H1 (cell line): ENCODE measurements at regions of chr15 and their contacts with region 1.

Region 1: GRCh38 chr15:65212097-65212496 is 824 bp upstream of the CILP start:
- DNase-seq: peak in 1 of 2 experiments; percentile 71
- H3K4me3 ChIP-seq: no peak overlapping the region
- H3K27ac ChIP-seq: no peak overlapping the region
- H3K4me1 ChIP-seq: peaks cover 0 to 4% (median 0%) of the 10 kb centered on the region in 4 experiments; a peak in 3 of 7 replicates
- H3K27me3 ChIP-seq: no peaks in the 10 kb centered on the region; a peak in 1 of 7 replicates
- CTCF ChIP-seq: peak; percentile 74 to 94 (median 85)
- EP300 ChIP-seq: no peak
- POLR2A ChIP-seq: no peak
- RAD21 ChIP-seq: peak; percentile 49 to 62

Region 2: GRCh38 chr15:65133548-65134200 is 78.4 kb before region 1 on chr15 and contains the start of gene PDCD7:
- CTCF ChIA-PET with region 1: no interaction called
- POLR2A ChIA-PET with region 1: no interaction called
- DNase-seq: peak; percentile 60 to 86
- H3K4me3 ChIP-seq: peak within 1 kb of the TSS; percentile 71 to 77 (median 72)
- H3K27ac ChIP-seq: peak within 1 kb of the TSS; percentile 51; the same call in 1 of the 2 replicates
- H3K4me1 ChIP-seq: peaks cover 2 to 6% (median 3%) of the 10 kb centered on the region in 4 experiments; a peak in 4 of 7 replicates
- H3K27me3 ChIP-seq: no peaks in the 10 kb centered on the region
- CTCF ChIP-seq: no peak
- EP300 ChIP-seq: no peak
- POLR2A ChIP-seq: peak in 1 of 2 experiments; percentile 91; a peak in 2 of 3 replicates
- RAD21 ChIP-seq: no peak
- total RNA-seq, gene PDCD7: 25.5 and 25.6 TPM in 2 replicates

Region 3: GRCh38 chr15:65177901-65178300 is 34.2 kb before region 1 on chr15:
- CTCF ChIA-PET with region 1: no interaction called
- POLR2A ChIA-PET with region 1: no interaction called
- DNase-seq: no peak
- H3K4me3 ChIP-seq: no peak overlapping the region
- H3K27ac ChIP-seq: no peak overlapping the region
- H3K4me1 ChIP-seq: no peaks in the 10 kb centered on the region
- H3K27me3 ChIP-seq: no peaks in the 10 kb centered on the region
- CTCF ChIP-seq: no peak
- EP300 ChIP-seq: no peak
- POLR2A ChIP-seq: no peak
- RAD21 ChIP-seq: no peak

Region 4: DNA sequence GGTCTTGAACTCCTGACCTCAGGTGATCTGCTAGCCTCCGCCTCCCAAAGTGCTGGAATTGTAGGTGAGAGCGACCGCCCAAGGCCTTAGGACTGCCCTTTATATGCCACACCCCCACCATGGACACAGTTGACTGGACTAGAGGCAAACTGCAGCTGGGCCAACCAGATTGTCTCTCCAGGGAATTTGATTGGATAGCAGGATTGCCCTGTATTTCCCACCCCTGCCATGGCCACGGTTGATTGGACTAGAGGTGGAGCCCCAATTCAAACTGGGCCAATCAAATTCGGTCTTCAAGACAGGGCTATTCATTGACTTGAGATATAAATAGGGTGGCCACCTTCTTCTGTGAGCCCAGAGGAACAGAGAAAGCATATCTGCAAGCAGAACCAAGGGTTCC is 20.1 kb before region 1 on chr15:
- CTCF ChIA-PET with region 1: interaction called, 62 read pairs
- POLR2A ChIA-PET with region 1: interaction called, 5 read pairs
- DNase-seq: no peak
- H3K4me3 ChIP-seq: no peak overlapping the region
- H3K27ac ChIP-seq: no peak overlapping the region
- H3K4me1 ChIP-seq: 0 out of 7 replicates have a peak, but pooled peaks cover 0 to 2% (median 0%) of the 10 kb centered on the region in 4 experiments
- H3K27me3 ChIP-seq: no peaks in the 10 kb centered on the region
- CTCF ChIP-seq: no peak
- EP300 ChIP-seq: no peak
- POLR2A ChIP-seq: no peak
- RAD21 ChIP-seq: no peak

Region 5: DNA sequence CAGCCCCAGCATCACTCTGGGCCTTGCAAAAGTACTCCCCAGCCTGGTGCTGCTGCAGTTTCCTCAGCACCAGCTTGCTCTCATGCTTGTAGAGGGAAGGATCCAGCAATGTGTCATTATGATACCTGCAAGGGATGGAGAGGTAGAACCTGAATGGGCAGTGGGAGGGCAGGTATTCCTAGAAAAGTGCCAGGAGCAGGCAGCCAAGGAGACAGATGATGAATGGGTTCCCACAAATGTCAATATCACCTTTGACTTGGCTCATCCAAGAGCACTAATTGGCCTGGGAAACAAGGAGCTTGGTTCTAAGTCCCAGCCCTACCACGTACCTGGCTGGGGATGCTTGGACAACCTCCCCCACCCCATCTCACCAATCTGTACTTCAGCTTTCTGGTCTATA is 10.2 kb before region 1 on chr15:
- CTCF ChIA-PET with region 1: interaction called, 62 read pairs
- POLR2A ChIA-PET with region 1: interaction called, 3 read pairs
- DNase-seq: no peak
- H3K4me3 ChIP-seq: no peak overlapping the region
- H3K27ac ChIP-seq: no peak overlapping the region
- H3K4me1 ChIP-seq: no peaks in the 10 kb centered on the region
- H3K27me3 ChIP-seq: no peaks in the 10 kb centered on the region
- CTCF ChIP-seq: no peak
- EP300 ChIP-seq: no peak
- POLR2A ChIP-seq: no peak
- RAD21 ChIP-seq: no peak

Region 6: GRCh38 chr15:65222891-65223290 is 10.8 kb after region 1 on chr15:
- CTCF ChIA-PET with region 1: interaction called, 43 read pairs
- POLR2A ChIA-PET with region 1: interaction called, 4 read pairs
- DNase-seq: no peak
- H3K4me3 ChIP-seq: no peak overlapping the region
- H3K27ac ChIP-seq: no peak overlapping the region
- H3K4me1 ChIP-seq: peaks cover 0 to 4% (median 2%) of the 10 kb centered on the region in 4 experiments; a peak in 4 of 7 replicates
- H3K27me3 ChIP-seq: no peaks in the 10 kb centered on the region
- CTCF ChIP-seq: no peak
- EP300 ChIP-seq: no peak
- POLR2A ChIP-seq: no peak
- RAD21 ChIP-seq: no peak

Region 7: DNA sequence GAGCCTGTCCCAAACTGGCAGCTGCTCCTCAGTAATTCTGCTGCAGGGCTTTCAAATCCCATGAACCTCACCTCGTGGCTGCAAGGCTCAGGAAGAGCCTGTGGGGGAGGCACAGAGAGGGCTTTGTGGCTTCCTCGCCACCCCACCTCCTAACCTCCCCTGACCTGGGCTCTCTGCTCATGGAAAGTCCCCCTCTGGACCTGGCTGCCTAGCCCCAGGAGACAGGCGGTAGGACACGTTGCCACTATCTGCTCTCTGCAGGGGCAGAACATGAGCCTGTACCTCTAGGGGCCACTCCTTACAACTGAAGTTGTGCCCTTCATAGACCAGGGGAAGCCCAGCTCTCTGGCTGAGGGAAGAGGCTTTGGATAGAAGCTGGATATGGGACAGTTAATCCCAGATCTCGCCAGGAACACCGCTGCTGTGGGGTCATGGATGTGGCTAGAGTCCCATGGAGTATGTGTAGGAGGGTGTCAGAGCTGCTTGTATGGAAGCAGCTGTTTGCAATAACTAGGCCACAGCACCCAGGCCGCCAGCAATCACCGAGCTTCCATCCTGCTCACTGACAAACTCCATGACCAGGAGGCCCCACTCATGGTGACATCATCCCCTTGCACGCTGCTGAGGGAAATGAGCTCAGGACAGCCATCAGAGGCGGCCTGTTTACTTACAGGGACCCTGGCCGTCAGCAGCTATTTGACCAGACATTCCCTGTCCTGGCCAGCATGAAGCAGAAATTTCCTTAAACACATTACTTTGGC is 33.2 kb after region 1 on chr15:
- CTCF ChIA-PET with region 1: interaction called, 11 read pairs
- POLR2A ChIA-PET with region 1: no interaction called
- DNase-seq: no peak
- H3K4me3 ChIP-seq: no peak overlapping the region
- H3K27ac ChIP-seq: no peak overlapping the region
- H3K4me1 ChIP-seq: peaks cover 0 to 4% (median 2%) of the 10 kb centered on the region in 4 experiments; a peak in 4 of 7 replicates
- H3K27me3 ChIP-seq: no peaks in the 10 kb centered on the region; a peak in 1 of 7 replicates
- CTCF ChIP-seq: no peak
- EP300 ChIP-seq: no peak
- POLR2A ChIP-seq: no peak
- RAD21 ChIP-seq: no peak

Region 8: DNA sequence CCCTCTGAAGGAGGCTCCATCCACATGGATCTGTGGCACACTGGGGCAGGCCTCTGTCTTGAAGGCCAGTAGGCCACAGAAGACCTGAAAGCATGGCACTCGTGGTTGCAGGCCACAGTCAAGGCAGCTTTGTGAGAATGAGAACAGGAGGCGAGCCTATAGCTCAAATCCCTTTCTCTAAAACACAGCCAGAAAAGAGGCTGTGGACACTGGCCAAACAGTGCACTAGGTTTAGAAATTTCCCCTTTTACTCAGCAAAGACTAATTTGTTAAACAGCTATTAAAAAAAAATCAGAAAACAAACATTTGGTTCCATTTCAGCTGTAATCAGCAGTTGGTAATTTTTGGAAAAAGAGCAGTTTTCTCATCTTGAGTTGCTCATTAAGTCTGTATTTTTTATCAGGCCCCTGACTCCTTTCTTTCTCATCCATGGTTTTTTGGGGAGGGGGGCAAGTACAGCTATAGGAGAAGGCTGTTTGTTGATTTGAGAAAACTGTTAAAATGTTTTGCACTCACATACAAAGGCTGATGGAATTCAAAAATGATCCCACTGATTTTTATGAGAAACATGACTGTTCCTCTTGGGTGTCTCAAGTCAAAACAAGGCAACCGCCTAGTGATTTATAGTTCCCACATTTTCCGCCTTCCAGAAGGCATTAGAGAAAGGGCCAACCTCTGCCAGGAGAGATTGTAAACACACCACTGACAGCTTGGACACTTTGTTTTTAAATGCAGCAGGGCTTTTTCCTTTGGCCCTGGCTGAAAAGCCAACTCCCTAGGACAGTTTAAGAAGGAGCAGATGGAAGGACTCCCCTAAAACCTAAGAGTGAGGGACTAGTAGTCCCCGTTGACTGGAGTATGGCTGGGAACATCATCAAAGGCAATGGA is 46.5 kb after region 1 on chr15:
- CTCF ChIA-PET with region 1: interaction called, 10 read pairs
- POLR2A ChIA-PET with region 1: no interaction called
- DNase-seq: no peak
- H3K4me3 ChIP-seq: no peak overlapping the region
- H3K27ac ChIP-seq: no peak overlapping the region
- H3K4me1 ChIP-seq: no peaks in the 10 kb centered on the region
- H3K27me3 ChIP-seq: no peaks in the 10 kb centered on the region
- CTCF ChIP-seq: no peak
- EP300 ChIP-seq: no peak
- POLR2A ChIP-seq: no peak
- RAD21 ChIP-seq: no peak

Region 9: GRCh38 chr15:65264863-65265430 is 52.9 kb after region 1 on chr15:
- CTCF ChIA-PET with region 1: interaction called, 87 read pairs
- POLR2A ChIA-PET with region 1: interaction called, 3 read pairs
- DNase-seq: no peak
- H3K4me3 ChIP-seq: no peak overlapping the region
- H3K27ac ChIP-seq: no peak overlapping the region
- H3K4me1 ChIP-seq: peaks cover 3 to 10% (median 4%) of the 10 kb centered on the region in 4 experiments; a peak in 5 of 7 replicates
- H3K27me3 ChIP-seq: no peaks in the 10 kb centered on the region
- CTCF ChIP-seq: no peak
- EP300 ChIP-seq: no peak
- POLR2A ChIP-seq: no peak
- RAD21 ChIP-seq: no peak